Right ventricle myocardium superior (tissue), 1 donor: ENCODE measurements at regions of chr19 and their contacts with region 1.

Region 1: GRCh38 chr19:40674291-40674690 is 16.2 kb downstream of the NUMBL start:
- DNase-seq: no peak
- ATAC-seq: no peak

Region 2: DNA sequence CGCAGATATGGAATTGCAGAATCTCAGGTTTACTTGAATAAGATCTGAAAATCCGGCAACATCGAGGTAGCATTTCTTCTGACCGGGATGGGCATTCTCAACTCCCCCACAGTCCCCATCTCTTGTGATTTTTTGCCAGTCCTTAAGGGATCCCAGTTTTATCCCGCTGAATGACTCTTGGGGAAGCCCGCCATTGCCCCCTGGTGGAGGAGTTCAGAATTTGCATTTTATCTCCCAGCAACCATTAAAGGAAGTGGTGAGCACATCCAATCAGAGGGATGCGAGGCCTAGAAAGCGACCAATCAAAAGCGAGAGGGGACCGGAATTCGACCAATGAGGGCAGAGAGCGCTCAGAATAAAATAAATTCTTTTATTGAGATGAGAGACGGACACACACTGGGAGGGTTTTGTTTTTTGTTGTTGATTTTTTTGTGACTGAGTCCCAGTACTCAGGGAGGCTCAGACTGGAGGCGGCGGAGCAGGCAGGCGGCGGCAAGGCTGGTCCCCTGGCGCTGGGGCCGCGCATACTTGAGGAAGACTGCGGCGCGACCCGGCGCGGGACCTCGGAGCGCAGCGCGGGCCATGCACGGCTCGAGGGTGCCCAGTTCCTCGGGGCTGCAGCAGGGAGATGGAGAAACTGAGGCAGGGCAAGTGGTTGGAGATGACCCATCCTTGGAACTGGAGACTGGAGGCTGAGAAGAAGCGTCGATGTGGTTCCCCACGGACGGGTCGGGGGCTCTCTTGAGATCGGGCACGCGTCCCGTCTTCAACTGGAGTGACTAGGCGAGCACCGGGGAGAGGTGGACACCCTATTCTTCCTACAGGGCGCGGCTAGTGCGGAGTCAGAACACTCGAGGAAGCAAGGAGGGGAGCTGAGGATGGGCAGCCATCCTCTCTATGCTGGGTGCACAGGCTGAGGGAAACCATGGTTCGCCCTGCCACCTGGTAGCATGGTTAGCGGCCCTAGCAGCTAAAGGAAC is 452.1 kb before region 1 on chr19:
- intact Hi-C with region 1: no loop called
- DNase-seq: peak; percentile 68
- ATAC-seq: peak; percentile 85

Region 3: DNA sequence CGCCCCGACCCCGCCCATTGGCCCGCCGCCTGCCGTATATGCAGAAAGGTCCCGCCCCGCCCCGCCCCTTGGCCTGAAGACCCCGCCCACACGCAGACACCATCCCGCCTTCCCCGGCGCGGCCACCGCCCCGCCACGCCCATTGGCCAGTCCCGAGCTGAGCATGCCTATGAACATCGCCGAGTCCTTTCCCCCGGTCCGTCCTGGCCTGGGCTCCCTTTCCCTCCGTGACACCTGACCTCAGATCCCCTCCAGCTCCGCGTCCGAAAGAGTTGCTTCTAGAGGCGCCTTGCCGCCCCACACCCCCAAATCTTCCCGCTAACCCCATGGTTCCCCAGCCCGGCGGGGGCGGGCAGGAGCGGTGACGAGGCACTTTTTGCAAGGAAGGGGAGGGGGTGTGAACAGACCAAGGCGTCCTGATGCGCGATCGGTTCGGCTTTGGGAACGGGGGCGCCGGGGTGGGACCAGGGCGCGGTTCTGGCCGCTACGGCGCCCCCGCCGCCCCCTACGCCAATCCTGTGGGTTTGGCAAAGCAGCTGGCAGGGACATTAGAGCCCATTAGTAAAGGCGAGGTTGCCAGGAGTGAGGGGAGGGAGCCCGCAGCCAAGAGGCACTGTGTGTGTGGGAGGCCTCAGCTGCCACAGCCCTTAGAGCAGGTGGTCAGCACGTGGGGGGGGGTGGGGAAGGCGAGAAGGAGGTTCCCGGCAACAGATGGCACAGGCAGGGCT is 16.6 kb after region 1 on chr19:
- intact Hi-C with region 1: no loop called
- DNase-seq: peak; percentile 98
- ATAC-seq: peak; percentile 92

Region 4: GRCh38 chr19:40750059-40750873 is 76.0 kb after region 1 on chr19 and contains the start of gene ACTMAP:
- intact Hi-C with region 1: no loop called
- DNase-seq: peak; percentile 99
- ATAC-seq: peak; percentile 95
- total RNA-seq, gene ACTMAP: 5.2 TPM

Region 5: DNA sequence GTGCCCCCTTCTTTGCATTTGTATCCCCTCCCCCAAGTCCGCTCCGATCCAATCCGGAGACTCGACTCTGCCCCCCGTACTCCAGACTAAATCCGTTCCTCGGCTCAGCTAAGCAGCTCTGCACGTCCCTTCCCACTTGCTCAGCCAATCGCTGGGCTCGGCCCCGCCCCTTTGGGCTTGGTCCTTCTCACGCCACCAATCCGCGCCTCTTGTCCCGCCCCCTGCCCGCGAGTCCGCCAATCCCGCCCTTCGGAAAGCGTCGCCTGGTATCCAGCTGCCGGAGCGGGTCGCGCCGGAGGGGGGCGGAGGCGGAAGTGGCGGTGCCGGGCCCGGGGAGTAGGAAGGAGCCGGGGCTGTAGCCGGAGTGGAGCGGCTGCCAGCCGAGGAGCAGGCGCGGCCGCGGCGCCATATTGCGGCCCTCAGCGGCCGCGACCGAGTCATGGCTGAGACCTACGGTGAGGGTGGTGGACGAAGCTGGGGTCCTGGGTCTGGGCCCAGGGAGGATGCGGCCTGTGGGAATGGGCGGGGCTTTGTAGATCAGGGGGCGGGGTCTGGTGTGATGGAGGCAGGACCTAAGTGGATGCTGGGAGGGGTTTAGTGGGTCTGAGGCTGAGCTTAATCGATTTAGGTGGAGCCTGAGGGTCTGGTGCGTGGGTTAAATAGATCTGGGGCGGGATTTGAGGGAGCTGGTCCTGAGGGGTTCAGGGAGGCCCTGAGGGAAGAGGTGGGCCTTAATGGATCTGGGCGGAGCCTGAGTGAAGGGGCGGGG is 103.8 kb after region 1 on chr19 and contains the start of gene RAB4B:
- intact Hi-C with region 1: no loop called
- DNase-seq: peak; percentile 100
- ATAC-seq: peak; percentile 96
- total RNA-seq, gene RAB4B: 12.6 TPM

Region 6: DNA sequence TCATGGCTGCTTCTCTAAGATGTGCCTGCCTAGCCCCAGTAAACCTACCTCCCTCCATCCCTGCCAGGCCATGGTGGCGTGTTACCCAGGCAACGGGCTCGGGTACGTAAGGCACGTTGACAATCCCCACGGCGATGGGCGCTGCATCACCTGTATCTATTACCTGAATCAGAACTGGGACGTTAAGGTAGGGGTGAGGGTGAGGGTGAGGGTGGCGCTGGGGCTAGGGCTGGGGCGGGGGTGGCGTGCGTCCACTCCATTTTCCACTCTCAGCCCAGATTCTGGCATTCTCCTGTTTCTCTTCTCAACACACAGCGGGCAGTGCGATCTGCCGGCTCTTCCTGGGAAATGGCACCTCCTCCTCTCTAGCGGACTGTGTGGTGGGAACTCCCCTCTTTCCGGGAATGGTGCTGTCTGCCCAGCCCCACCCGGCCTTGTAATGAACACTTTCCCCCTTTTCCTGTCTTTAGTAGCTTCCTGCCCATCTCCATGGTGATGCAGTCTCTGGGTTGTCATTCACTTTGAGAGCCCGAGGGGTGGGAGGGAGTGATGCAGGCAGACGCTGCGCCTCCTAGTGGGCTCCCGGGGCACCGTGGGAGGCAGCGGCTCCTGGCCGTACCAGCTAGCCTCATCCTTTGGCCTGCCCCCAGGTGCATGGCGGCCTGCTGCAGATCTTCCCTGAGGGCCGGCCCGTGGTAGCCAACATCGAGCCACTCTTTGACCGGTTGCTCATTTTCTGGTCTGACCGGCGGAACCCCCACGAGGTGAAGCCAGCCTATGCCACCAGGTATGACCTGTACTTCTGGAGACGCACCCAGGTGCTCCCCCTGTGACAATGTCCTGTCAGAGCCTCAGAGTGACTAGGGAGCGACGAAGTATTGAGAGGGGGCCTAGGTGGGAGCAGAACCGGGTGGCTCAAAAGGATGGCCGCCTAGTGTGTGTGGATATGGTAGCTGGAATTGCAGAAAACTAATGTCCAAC is 132.5 kb after region 1 on chr19:
- intact Hi-C with region 1: loop called (anchors 10 kb)
- DNase-seq: peak; percentile 87
- ATAC-seq: peak; percentile 10